Transverse colon (tissue), 4 donors: ENCODE measurements at regions of chr6 and their contacts with region 1.

Region 1: DNA sequence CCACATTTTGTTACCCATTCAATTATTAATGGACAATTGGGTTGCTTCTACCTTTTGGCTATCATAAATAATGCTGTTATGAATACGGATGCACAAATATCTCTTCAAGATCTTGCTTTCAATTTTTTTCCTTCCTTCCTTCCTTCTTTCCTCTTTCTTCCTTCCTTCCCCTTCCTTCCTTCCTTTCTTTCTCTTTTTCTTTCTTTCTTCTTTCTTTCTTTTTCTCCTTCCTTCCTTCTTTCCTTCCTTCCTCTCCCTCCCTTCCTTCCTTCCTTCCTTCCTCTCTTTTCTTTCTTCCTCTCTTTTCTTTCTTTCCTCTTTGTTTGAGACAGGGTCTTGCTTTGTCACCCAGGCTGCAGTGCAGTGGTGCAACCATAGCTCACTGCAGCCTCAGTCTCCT is 39.2 kb downstream of the ZNF184 start:
- DNase-seq: no peak
- H3K4me3 ChIP-seq: no peak overlapping the region
- H3K27ac ChIP-seq: no peak overlapping the region
- H3K4me1 ChIP-seq: no peaks in the 10 kb centered on the region
- H3K27me3 ChIP-seq: no peaks in the 10 kb centered on the region
- CTCF ChIP-seq: no peak
- EP300 ChIP-seq: no peak
- POLR2A ChIP-seq: no peak

Region 2: GRCh38 chr6:27388293-27389197 is 45.2 kb before region 1 on chr6 and contains the start of gene ZNF391:
- in situ Hi-C with region 1: no loop called
- intact Hi-C with region 1: no loop called
- DNase-seq: peak; percentile 70
- H3K4me3 ChIP-seq: peak within 1 kb of the TSS; percentile 52 to 64 (median 53)
- H3K27ac ChIP-seq: peak within 1 kb of the TSS; percentile 58 to 82 (median 78)
- H3K4me1 ChIP-seq: peaks cover 0 to 11% (median 5%) of the 10 kb centered on the region in 4 donors
- H3K27me3 ChIP-seq: no peaks in the 10 kb centered on the region
- CTCF ChIP-seq: no peak
- EP300 ChIP-seq: no peak
- POLR2A ChIP-seq: no peak
- total RNA-seq, gene ZNF391: 0.75 to 2.4 (median 1.2) TPM in 3 of 4 donors, not detected in the other

Region 3: GRCh38 chr6:27541212-27541931 is 107.7 kb after region 1 on chr6:
- in situ Hi-C with region 1: no loop called
- intact Hi-C with region 1: no loop called
- DNase-seq: no peak
- H3K4me3 ChIP-seq: no peak overlapping the region
- H3K27ac ChIP-seq: no peak overlapping the region
- H3K4me1 ChIP-seq: peaks cover 0 to 9% (median 3%) of the 10 kb centered on the region in 4 donors
- H3K27me3 ChIP-seq: peaks cover 93% of the 10 kb centered on the region
- CTCF ChIP-seq: no peak
- EP300 ChIP-seq: no peak
- POLR2A ChIP-seq: no peak

Region 4: GRCh38 chr6:27662769-27663168 is 229.1 kb after region 1 on chr6:
- in situ Hi-C with region 1: no loop called
- intact Hi-C with region 1: no loop called
- DNase-seq: no peak
- H3K4me3 ChIP-seq: no peak overlapping the region
- H3K27ac ChIP-seq: no peak overlapping the region
- H3K4me1 ChIP-seq: peaks cover 0 to under 1% (median 0%) of the 10 kb centered on the region in 4 donors
- H3K27me3 ChIP-seq: peaks cover 60% of the 10 kb centered on the region
- CTCF ChIP-seq: no peak
- EP300 ChIP-seq: no peak
- POLR2A ChIP-seq: no peak

Region 5: GRCh38 chr6:28474441-28475219 is 1040.9 kb after region 1 on chr6:
- in situ Hi-C with region 1: no loop called
- intact Hi-C with region 1: loop called (anchors 5 kb)
- DNase-seq: no peak
- H3K4me3 ChIP-seq: no peak overlapping the region
- H3K27ac ChIP-seq: no peak overlapping the region
- H3K4me1 ChIP-seq: no peaks in the 10 kb centered on the region
- H3K27me3 ChIP-seq: peaks cover 62% of the 10 kb centered on the region
- CTCF ChIP-seq: no peak
- EP300 ChIP-seq: no peak
- POLR2A ChIP-seq: no peak

Region 6: GRCh38 chr6:28776269-28777146 is 1342.8 kb after region 1 on chr6:
- in situ Hi-C with region 1: no loop called
- intact Hi-C with region 1: no loop called
- DNase-seq: no peak
- H3K4me3 ChIP-seq: no peak overlapping the region
- H3K27ac ChIP-seq: no peak overlapping the region
- H3K4me1 ChIP-seq: peaks cover 0 to 5% (median 2%) of the 10 kb centered on the region in 4 donors
- H3K27me3 ChIP-seq: peaks cover 100% of the 10 kb centered on the region
- CTCF ChIP-seq: no peak
- EP300 ChIP-seq: no peak
- POLR2A ChIP-seq: no peak